Prostate gland (tissue), 2 donors: ENCODE measurements at regions of chr22 and their contacts with region 1.

Region 1: DNA sequence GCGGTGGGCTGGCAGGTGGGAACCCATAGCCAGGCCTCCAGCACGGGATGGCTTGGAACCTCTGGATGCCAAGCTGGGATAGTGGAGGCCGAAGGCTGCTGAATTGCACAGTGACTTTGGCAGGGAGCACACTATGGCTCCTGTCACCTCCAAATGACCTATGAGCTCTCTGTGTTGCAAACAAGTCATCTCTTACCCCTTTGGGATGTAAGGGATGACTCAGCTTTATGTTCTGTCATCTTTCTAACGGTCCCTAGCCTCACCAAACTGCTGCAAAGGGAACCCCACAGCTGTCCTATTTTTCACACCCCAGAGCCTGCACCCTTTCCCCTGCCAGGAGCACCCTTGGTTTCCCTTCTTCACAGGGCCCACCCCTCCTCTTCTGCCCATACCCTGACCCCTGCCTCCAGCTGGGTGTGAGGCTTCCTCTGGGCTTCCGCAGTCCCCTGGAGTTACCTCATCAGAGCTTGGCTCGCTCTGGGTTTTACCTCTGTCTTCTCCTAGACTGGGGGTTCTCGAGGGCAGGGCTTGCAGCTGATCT is 2.7 kb upstream of the SCUBE1 start:
- DNase-seq: no peak
- H3K4me3 ChIP-seq: no peak overlapping the region
- H3K27ac ChIP-seq: no peak overlapping the region
- H3K4me1 ChIP-seq: no peaks in the 10 kb centered on the region
- H3K27me3 ChIP-seq: peaks cover 10% of the 10 kb centered on the region
- CTCF ChIP-seq: no peak
- POLR2A ChIP-seq: no peak

Region 2: GRCh38 chr22:42848941-42849550 is 496.8 kb before region 1 on chr22:
- intact Hi-C with region 1: no loop called
- DNase-seq: no peak
- H3K4me3 ChIP-seq: no peak overlapping the region
- H3K27ac ChIP-seq: peak overlapping the region; percentile 6 to 40
- H3K4me1 ChIP-seq: no peaks in the 10 kb centered on the region
- H3K27me3 ChIP-seq: no peaks in the 10 kb centered on the region
- CTCF ChIP-seq: no peak
- POLR2A ChIP-seq: no peak

Region 3: DNA sequence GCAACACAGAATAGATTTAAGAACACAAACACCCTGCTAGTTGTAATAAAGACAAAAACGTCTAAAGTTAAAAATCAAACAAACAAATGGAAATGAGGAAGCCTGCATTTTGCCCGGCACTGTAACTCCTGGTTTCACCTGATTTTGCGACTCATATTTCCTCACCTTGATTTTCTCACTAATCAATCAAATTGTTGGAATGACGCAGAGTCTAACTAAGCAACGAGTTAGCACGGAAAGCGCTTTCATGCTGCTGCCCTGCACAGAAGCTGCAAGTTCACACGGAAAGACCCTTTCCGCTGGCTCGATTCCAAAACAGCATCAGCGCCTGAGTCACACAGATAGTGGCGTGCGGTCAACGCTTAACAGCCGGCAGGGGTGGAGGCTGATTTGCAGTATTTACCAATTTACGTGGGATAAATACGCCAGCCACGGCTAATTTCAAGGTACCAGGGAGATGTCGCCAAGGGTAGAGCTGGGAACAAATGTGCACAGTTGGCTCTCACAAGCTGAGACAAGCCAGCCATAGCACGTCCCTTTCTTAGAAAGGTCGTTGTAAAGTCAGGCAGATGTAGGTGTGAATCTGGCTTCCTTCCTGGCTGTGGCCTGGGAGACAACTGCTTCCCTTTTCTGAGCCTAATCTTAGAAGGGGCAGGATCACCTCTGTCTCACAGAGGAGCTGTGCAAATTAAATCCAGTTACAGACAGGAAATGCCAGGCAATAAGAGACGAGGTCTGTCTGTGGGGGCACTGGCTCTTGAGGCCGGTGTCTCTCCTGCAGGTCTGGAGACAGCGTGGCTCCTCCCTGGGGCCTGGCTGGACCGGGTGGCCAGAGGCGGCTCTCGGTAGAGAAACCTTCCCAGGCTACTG is 82.0 kb before region 1 on chr22:
- intact Hi-C with region 1: no loop called
- DNase-seq: peak; percentile 22
- H3K4me3 ChIP-seq: no peak overlapping the region
- H3K27ac ChIP-seq: no peak overlapping the region
- H3K4me1 ChIP-seq: no peaks in the 10 kb centered on the region
- H3K27me3 ChIP-seq: peaks cover 5% of the 10 kb centered on the region
- CTCF ChIP-seq: no peak
- POLR2A ChIP-seq: no peak

Region 4: GRCh38 chr22:43273902-43274484 is 71.8 kb before region 1 on chr22:
- intact Hi-C with region 1: loop called (anchors 1 kb)
- DNase-seq: peak; percentile 40
- H3K4me3 ChIP-seq: no peak overlapping the region
- H3K27ac ChIP-seq: no peak overlapping the region
- H3K4me1 ChIP-seq: no peaks in the 10 kb centered on the region
- H3K27me3 ChIP-seq: no peaks in the 10 kb centered on the region
- CTCF ChIP-seq: peak; percentile 36 to 79 (median 70)
- POLR2A ChIP-seq: no peak

Region 5: DNA sequence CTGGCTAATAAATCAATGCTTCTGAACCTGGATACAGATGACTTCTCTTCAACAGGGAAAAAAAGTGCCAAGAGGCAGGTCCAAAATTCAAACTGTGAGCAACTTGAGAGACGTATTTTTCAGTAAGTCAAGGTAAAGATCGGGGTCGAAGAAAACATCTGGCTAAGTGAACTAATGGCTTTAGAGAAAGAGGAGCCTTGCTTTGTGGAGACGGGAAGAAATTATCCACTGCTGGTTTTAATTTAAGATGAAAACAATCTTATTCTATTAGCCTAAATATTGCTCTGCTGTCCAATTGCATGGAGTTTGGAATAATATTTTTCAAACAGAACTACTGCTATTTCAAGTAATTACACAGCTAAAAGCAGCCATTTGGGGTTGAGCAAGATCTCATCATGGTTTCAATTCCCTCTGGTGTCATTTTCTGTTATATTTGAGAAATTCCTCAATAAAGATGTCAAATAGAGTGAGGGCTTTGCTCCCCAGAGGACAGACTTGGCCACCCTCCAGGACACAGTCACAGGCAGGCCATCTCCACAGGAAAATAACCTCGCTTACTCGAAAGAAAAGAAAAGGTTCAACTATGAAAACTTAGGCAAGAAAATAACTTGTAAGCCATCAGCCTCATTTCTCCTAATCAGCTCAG is 32.5 kb before region 1 on chr22:
- intact Hi-C with region 1: no loop called
- DNase-seq: no peak
- H3K4me3 ChIP-seq: no peak overlapping the region
- H3K27ac ChIP-seq: no peak overlapping the region
- H3K4me1 ChIP-seq: no peaks in the 10 kb centered on the region
- H3K27me3 ChIP-seq: no peaks in the 10 kb centered on the region
- CTCF ChIP-seq: no peak
- POLR2A ChIP-seq: no peak